Sciatic nerve (tissue), 2 donors: ENCODE measurements at regions of chr6 and their contacts with region 1.

Region 1: GRCh38 chr6:25756382-25757363 is 2.1 kb downstream of the SLC17A4 start:
- DNase-seq: no peak
- ATAC-seq: no peak

Region 2: GRCh38 chr6:25717866-25718740 is 38.6 kb before region 1 on chr6:
- intact Hi-C with region 1: no loop called
- DNase-seq: no peak
- ATAC-seq: no peak

Region 3: GRCh38 chr6:25788305-25788922 is 31.7 kb after region 1 on chr6:
- intact Hi-C with region 1: no loop called
- DNase-seq: no peak
- ATAC-seq: no peak

Region 4: GRCh38 chr6:25866011-25866410 is 109.3 kb after region 1 on chr6:
- intact Hi-C with region 1: no loop called
- DNase-seq: no peak
- ATAC-seq: no peak

Region 5: GRCh38 chr6:26216356-26216885 is 459.7 kb after region 1 on chr6:
- intact Hi-C with region 1: loop called (anchors 5 kb)
- DNase-seq: no peak
- ATAC-seq: peak; percentile 91